CD8-positive, alpha-beta T cell (primary cell): ENCODE measurements at regions of chr12 and their contacts with region 1.

Region 1: GRCh38 chr12:14113031-14113430 is 131.6 kb upstream of the GRIN2B start:
- DNase-seq: no peak
- ATAC-seq: no peak
- H3K4me3 ChIP-seq: no peak overlapping the region
- H3K4me3 Mint-ChIP-seq: no peak overlapping the region
- H3K27ac ChIP-seq: no peak overlapping the region
- H3K27ac Mint-ChIP-seq: no peak overlapping the region
- H3K4me1 ChIP-seq: no peaks in the 10 kb centered on the region
- H3K4me1 Mint-ChIP-seq: no peaks in the 10 kb centered on the region
- H3K27me3 ChIP-seq: no peaks in the 10 kb centered on the region
- H3K27me3 Mint-ChIP-seq: peaks cover 10% of the 10 kb centered on the region
- CTCF ChIP-seq: no peak

Region 2: DNA sequence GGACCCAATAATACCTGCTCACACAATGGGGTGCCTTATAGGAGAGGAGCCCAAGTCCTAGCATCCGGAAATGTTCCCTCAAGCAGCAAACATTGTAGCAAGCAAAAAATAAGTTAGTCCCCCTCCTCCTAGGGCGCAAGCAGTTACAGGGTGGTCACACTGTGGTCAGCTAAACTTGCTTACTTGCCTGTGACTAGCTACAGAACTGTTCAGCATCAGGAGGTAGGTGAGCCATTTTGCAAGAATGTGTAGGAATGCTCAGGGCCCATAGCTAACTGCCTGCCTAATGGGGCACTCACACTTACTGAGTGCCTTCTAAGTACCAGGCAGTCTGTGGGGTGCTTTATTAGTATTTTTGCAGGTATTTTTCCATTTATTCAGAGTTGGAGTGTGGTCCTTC is 23.0 kb after region 1 on chr12:
- CTCF ChIA-PET with region 1: no interaction called
- POLR2A ChIA-PET with region 1: no interaction called
- intact Hi-C with region 1: loop called in 1 of 2 experiments (anchors 2 kb)
- DNase-seq: no peak
- ATAC-seq: no peak
- H3K4me3 ChIP-seq: no peak overlapping the region
- H3K4me3 Mint-ChIP-seq: no peak overlapping the region
- H3K27ac ChIP-seq: no peak overlapping the region
- H3K27ac Mint-ChIP-seq: no peak overlapping the region
- H3K4me1 ChIP-seq: no peaks in the 10 kb centered on the region
- H3K4me1 Mint-ChIP-seq: no peaks in the 10 kb centered on the region
- H3K27me3 ChIP-seq: no peaks in the 10 kb centered on the region
- H3K27me3 Mint-ChIP-seq: peaks cover 21% of the 10 kb centered on the region
- CTCF ChIP-seq: no peak